Activated CD4-positive, alpha-beta T cell treated with anti-CD3 and anti-CD28 coated beads, Interleukin-2, amount 10 ng/mL, durations not matched to agents 24 days and 14 days (primary cell): ENCODE measurements at regions of chr2 and their contacts with region 1.

Region 1: GRCh38 chr2:30421604-30422443 is 25.2 kb upstream of the LCLAT1 start:
- DNase-seq: peak; percentile 76
- H3K4me3 Mint-ChIP-seq: peak overlapping the region; percentile 62
- H3K27ac Mint-ChIP-seq: peak overlapping the region; percentile 89
- H3K4me1 Mint-ChIP-seq: peaks cover 34% of the 10 kb centered on the region
- H3K27me3 Mint-ChIP-seq: no peaks in the 10 kb centered on the region

Region 2: GRCh38 chr2:30208452-30208851 is 213.4 kb before region 1 on chr2:
- intact Hi-C with region 1: loop called (anchors 1 kb)
- DNase-seq: peak; percentile 75
- H3K4me3 Mint-ChIP-seq: no peak overlapping the region
- H3K27ac Mint-ChIP-seq: no peak overlapping the region
- H3K4me1 Mint-ChIP-seq: peaks cover 13% of the 10 kb centered on the region
- H3K27me3 Mint-ChIP-seq: peaks cover 9% of the 10 kb centered on the region

Region 3: DNA sequence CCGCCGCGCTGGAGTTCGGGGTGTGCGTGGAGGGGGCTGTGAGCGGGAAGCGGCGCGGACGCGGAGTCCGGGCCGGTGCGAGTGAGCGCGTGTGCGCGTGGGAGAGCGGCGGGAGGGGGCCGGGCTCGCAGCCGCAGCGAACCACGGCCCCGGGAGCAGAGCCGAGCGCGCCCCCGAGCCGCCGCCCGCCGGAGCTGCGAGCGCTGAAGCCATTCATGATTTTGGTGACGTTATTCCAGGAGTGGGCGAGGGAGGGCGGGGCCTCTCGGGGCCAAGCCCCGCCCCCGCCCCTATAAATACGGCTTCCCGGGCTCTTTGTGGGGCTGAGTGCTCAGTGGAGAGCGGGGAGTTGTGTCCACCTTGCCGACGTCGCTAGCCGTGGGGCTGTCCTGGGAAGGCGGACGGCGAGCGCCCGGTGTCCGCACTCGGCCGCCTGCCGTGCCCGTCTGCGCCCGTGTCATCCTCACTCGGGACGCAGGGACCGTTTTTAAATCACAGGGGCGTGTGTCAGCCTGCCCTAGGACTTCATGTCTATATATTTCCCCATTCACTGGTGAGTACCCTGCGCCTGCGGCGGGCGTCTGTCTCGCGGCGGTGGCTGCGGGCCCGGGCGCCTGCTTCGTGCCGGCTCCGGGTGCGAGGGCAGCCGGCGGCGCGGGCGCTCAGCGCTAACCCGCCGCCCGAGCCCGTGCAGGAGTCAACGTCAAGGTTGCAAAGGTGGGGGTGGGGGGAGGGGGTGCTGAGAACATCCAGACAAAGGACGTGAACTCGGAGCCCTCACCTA is 190.4 kb before region 1 on chr2 and contains the start of gene LBH:
- intact Hi-C with region 1: loop called (anchors 1 kb)
- DNase-seq: peak; percentile 94
- H3K4me3 Mint-ChIP-seq: peak within 1 kb of the TSS; percentile 84
- H3K27ac Mint-ChIP-seq: peak within 1 kb of the TSS; percentile 89
- H3K4me1 Mint-ChIP-seq: peaks cover 58% of the 10 kb centered on the region
- H3K27me3 Mint-ChIP-seq: no peaks in the 10 kb centered on the region
- total RNA-seq, gene LBH: 176 and 184 TPM in 2 replicates

Region 4: GRCh38 chr2:30273261-30273861 is 148.5 kb before region 1 on chr2:
- intact Hi-C with region 1: loop called (anchors 1 kb)
- DNase-seq: no peak
- H3K4me3 Mint-ChIP-seq: peak overlapping the region; percentile 71
- H3K27ac Mint-ChIP-seq: peak overlapping the region; percentile 99
- H3K4me1 Mint-ChIP-seq: peaks cover 72% of the 10 kb centered on the region
- H3K27me3 Mint-ChIP-seq: no peaks in the 10 kb centered on the region

Region 5: DNA sequence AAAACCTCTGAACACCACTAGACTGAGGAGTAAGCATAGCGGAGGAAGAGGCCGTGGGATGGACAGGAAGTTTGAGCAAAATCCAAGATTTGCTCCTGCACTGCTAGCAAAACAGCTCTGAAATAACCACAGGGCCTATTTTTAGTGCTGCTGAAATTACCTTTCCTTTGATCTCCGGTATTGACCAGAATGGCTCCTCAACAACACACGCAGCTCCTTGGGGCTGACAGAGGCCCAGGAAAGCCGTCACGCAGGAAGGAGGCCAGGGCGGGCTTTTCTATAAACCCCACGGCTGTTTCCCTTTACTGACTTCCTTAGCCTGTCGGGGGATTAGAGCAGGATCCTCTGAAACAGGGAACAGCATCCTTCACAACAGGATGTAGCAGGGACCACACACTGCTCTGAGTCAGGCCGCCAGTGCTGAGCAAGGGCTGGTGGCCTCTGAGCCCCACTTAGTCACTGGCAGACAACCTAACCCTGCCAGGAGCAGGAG is 55.6 kb before region 1 on chr2:
- intact Hi-C with region 1: no loop called
- DNase-seq: peak; percentile 74
- H3K4me3 Mint-ChIP-seq: peak overlapping the region; percentile 50
- H3K27ac Mint-ChIP-seq: peak overlapping the region; percentile 87
- H3K4me1 Mint-ChIP-seq: peaks cover 48% of the 10 kb centered on the region
- H3K27me3 Mint-ChIP-seq: no peaks in the 10 kb centered on the region

Region 6: DNA sequence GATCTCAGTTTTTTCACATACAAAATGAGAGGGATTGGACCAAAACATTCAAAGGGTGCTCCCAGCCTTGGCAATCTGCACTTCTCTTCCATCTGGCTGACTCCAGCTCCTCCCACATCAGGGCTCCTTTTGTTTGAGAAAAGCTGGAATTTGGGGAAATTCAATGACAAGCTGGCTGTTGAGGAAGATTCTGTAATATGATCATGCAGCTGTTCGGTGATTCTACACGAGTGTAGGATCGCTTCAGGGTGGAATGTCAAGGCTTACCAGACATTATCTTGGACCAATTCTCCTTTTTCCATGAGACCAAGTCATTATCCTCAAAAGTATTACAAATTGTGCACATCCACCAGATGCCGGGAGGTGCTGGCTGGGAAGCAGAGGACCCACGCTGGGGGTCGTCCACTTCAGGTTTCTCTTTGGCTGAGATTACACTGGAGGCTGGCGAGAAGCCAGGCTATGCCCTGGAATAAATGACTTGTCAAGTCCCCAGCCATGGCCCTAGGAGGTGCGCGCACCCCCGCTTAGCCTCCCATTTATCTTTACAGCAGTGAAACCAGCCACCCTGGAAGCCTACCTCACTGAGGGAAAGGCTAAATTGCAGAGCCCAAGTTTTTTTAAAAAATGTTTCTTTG is 17.4 kb before region 1 on chr2:
- intact Hi-C with region 1: loop called (anchors 2 kb)
- DNase-seq: no peak
- H3K4me3 Mint-ChIP-seq: no peak overlapping the region
- H3K27ac Mint-ChIP-seq: no peak overlapping the region
- H3K4me1 Mint-ChIP-seq: peaks cover 20% of the 10 kb centered on the region
- H3K27me3 Mint-ChIP-seq: no peaks in the 10 kb centered on the region

Region 7: GRCh38 chr2:30447149-30448045 is 25.6 kb after region 1 on chr2 and contains the start of gene LCLAT1:
- intact Hi-C with region 1: loop called (anchors 1 kb)
- DNase-seq: peak; percentile 97
- H3K4me3 Mint-ChIP-seq: peak within 1 kb of the TSS; percentile 85
- H3K27ac Mint-ChIP-seq: peak within 1 kb of the TSS; percentile 97
- H3K4me1 Mint-ChIP-seq: peaks cover 26% of the 10 kb centered on the region
- H3K27me3 Mint-ChIP-seq: no peaks in the 10 kb centered on the region
- total RNA-seq, gene LCLAT1: 31.4 and 34.7 TPM in 2 replicates